Activated CD4-positive, alpha-beta memory T cell treated with anti-CD3 and anti-CD28 coated beads for 36 hours (primary cell): ENCODE measurements at regions of chr11 and their contacts with region 1.

Region 1: DNA sequence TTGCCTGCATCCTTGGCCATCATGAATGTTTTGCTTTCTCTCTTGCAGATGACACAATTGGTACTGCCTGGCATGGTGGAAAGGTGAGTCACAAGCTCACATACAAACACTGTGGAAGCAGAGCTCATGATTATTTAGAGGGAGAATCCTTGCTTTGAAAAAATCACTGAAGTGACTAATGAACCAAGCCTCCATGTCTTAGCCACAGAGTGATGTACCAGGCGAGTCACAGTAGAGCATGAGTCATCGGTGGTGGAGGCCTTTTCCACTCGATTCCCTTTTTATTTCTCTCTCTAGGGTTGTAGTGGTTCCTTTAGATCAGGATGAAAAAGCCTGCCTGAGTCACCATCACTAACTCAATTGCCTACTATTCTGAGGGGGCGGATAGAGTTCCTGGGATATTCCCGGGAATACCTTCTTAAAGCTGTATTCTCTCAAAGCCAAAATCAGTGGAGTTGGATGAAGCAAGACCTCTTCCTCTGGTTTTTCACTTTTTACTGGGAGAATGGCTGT is 49.6 kb upstream of the ALKBH3 start:
- DNase-seq: peak; percentile 74
- H3K4me3 Mint-ChIP-seq: no peak overlapping the region
- H3K27ac Mint-ChIP-seq: peak overlapping the region; percentile 52
- H3K4me1 Mint-ChIP-seq: peaks cover 18% of the 10 kb centered on the region
- H3K27me3 Mint-ChIP-seq: no peaks in the 10 kb centered on the region

Region 2: GRCh38 chr11:43643898-43644620 is 186.9 kb before region 1 on chr11:
- CTCF ChIA-PET with region 1: no interaction called
- POLR2A ChIA-PET with region 1: no interaction called
- intact Hi-C with region 1: loop called (anchors 1 kb)
- DNase-seq: peak; percentile 93
- H3K4me3 Mint-ChIP-seq: peak overlapping the region; percentile 97
- H3K27ac Mint-ChIP-seq: peak overlapping the region; percentile 75
- H3K4me1 Mint-ChIP-seq: peaks cover 24% of the 10 kb centered on the region
- H3K27me3 Mint-ChIP-seq: peaks cover 11% of the 10 kb centered on the region

Region 3: GRCh38 chr11:43680521-43681400 is 150.2 kb before region 1 on chr11 and contains the start of gene HSD17B12:
- CTCF ChIA-PET with region 1: no interaction called
- POLR2A ChIA-PET with region 1: interaction called, 6 read pairs
- intact Hi-C with region 1: loop called (anchors 1 kb)
- DNase-seq: peak; percentile 100
- H3K4me3 Mint-ChIP-seq: peak within 1 kb of the TSS; percentile 92
- H3K27ac Mint-ChIP-seq: peak within 1 kb of the TSS; percentile 94
- H3K4me1 Mint-ChIP-seq: peaks cover 33% of the 10 kb centered on the region
- H3K27me3 Mint-ChIP-seq: no peaks in the 10 kb centered on the region
- total RNA-seq, gene HSD17B12: 32.8 to 35.3 TPM

Region 4: GRCh38 chr11:43852057-43852636 is 21.2 kb after region 1 on chr11:
- CTCF ChIA-PET with region 1: interaction called, 105 read pairs
- POLR2A ChIA-PET with region 1: no interaction called
- intact Hi-C with region 1: loop called (anchors 2 kb)
- DNase-seq: peak; percentile 73
- H3K4me3 Mint-ChIP-seq: no peak overlapping the region
- H3K27ac Mint-ChIP-seq: no peak overlapping the region
- H3K4me1 Mint-ChIP-seq: no peaks in the 10 kb centered on the region
- H3K27me3 Mint-ChIP-seq: no peaks in the 10 kb centered on the region

Region 5: DNA sequence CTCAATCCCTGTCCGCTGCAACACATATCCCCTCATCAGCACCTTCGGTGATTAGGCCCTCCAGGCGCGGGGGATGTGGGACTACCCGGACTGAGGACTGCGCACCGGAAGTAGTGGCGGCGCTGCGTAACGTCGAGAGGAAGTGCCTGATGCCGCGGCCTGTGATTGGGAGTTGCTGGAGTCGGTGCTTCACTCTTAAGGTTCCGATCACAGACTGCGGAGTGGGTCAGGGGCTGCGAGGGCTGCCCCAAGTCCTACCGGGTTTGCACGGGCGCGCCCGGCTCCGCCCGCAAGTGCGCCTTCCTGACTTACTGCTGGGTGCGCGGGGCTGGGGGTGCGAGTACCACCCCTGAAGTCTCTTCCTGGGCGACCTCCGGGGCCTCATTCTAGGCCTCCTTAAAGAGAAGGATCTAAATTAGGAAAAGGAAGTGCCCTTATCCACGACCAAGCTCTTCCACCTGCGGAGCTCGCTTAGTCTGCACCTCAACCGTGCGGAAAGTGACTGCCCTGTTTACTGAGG is 49.7 kb after region 1 on chr11 and contains the start of gene ALKBH3:
- CTCF ChIA-PET with region 1: interaction called, 4 read pairs
- POLR2A ChIA-PET with region 1: no interaction called
- intact Hi-C with region 1: loop called (anchors 5 kb)
- DNase-seq: peak; percentile 94
- H3K4me3 Mint-ChIP-seq: peak within 1 kb of the TSS; percentile 93
- H3K27ac Mint-ChIP-seq: peak within 1 kb of the TSS; percentile 72
- H3K4me1 Mint-ChIP-seq: peaks cover 23% of the 10 kb centered on the region
- H3K27me3 Mint-ChIP-seq: peaks cover 10% of the 10 kb centered on the region
- total RNA-seq, gene ALKBH3: 32.1 to 35.8 TPM

Region 6: GRCh38 chr11:43937434-43938411 is 106.7 kb after region 1 on chr11:
- CTCF ChIA-PET with region 1: no interaction called
- POLR2A ChIA-PET with region 1: no interaction called
- intact Hi-C with region 1: no loop called
- DNase-seq: no peak
- H3K4me3 Mint-ChIP-seq: no peak overlapping the region
- H3K27ac Mint-ChIP-seq: no peak overlapping the region
- H3K4me1 Mint-ChIP-seq: peaks cover 4% of the 10 kb centered on the region
- H3K27me3 Mint-ChIP-seq: peaks cover 29% of the 10 kb centered on the region